Activated CD8-positive, alpha-beta memory T cell treated with anti-CD3 and anti-CD28 coated beads, Interleukin-2, amount 10 ng/mL, durations not matched to agents 7 days and 5 days (primary cell): ENCODE measurements at regions of chr5 and their contacts with region 1.

Region 1: GRCh38 chr5:135565725-135566421 is 12.9 kb downstream of the CXCL14 start:
- DNase-seq: peak; percentile 77
- ATAC-seq: peak; percentile 76
- H3K4me3 Mint-ChIP-seq: no peak overlapping the region
- H3K27ac Mint-ChIP-seq: no peak overlapping the region
- H3K4me1 Mint-ChIP-seq: peaks cover 1% of the 10 kb centered on the region
- H3K27me3 Mint-ChIP-seq: peaks cover 7% of the 10 kb centered on the region

Region 2: DNA sequence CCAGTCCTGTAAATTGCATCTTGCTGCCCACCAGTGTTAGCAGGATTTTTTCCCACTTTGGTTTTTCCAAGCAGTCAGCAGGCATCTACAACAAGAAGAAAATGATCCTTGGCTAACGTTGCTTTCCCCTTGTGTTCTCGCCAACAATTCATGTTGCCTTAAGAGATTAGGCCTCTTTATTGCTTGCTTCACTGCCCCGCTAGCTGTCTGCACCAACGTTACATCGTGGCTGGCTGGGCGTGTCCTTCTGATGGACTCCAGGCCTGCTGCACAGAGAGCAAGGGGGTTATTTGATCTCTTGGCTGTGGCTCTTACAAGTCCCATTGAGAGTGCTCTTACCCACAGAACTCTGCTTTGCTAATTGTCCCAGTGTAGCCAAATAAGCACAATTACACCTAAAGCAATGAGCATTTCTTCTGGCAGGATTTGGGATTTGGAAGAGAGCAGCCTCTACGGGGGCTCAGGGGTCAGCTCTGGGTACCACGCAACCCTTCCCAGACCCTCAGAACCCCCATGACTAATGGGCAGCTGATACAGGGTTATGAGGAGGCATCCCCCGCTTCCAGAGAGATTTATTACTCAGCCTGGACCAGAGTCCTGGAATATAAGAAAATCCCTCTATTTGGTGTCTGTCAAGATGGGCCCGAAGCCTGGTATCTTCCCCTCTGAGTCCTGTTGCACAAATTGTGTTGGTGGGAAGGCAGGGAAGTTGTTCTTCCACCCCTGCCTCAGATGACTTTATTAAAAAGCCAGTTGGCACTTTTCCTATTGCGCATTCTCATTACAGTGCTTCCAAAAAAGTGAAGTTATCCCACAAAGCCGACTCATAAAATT is 136.4 kb before region 1 on chr5:
- CTCF ChIA-PET with region 1: no interaction called
- DNase-seq: no peak
- ATAC-seq: no peak
- H3K4me3 Mint-ChIP-seq: no peak overlapping the region
- H3K27ac Mint-ChIP-seq: no peak overlapping the region
- H3K4me1 Mint-ChIP-seq: peaks cover 13% of the 10 kb centered on the region
- H3K27me3 Mint-ChIP-seq: peaks cover 22% of the 10 kb centered on the region

Region 3: GRCh38 chr5:135582099-135582781 is 16.4 kb after region 1 on chr5:
- CTCF ChIA-PET with region 1: interaction called, 15 read pairs
- DNase-seq: no peak
- ATAC-seq: no peak
- H3K4me3 Mint-ChIP-seq: no peak overlapping the region
- H3K27ac Mint-ChIP-seq: no peak overlapping the region
- H3K4me1 Mint-ChIP-seq: peaks cover 2% of the 10 kb centered on the region
- H3K27me3 Mint-ChIP-seq: peaks cover 57% of the 10 kb centered on the region

Region 4: DNA sequence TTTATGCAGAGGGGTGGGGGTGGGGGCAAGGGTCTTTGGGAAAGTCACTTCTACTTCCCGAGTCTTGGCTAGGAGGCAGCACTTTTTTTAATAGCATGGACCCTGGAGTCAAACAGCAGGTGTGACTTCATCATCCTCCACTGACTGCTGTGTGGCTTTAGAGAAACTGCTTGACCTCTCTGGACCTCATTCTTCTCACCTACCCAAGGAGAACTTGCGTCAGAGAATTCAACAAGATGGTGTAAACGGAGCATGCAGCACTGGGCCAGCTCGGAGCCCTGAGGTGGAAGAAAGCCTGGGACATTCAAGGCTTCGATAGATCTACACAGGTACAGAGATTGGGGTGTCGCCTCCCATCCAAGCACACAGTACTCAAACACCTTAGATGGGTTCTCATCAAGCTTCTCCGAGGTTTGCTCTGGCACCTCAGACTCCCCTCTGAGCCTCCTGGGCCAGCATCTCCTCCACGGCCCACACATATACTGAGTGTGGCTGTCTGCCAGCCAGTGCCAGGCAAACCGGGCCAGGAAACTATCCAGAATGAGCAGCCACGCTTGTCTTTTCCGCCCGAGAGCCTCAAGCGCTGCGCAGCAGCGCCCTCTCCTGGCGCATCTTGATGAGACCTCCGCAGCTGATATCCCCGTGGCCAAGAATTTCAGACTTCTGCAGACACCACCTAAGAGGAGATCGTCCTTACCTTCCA is 264.0 kb after region 1 on chr5:
- CTCF ChIA-PET with region 1: interaction called, 27 read pairs
- DNase-seq: peak; percentile 54
- ATAC-seq: no peak
- H3K4me3 Mint-ChIP-seq: no peak overlapping the region
- H3K27ac Mint-ChIP-seq: no peak overlapping the region
- H3K4me1 Mint-ChIP-seq: no peaks in the 10 kb centered on the region
- H3K27me3 Mint-ChIP-seq: peaks cover 29% of the 10 kb centered on the region